OCI-LY7 (cell line): ENCODE measurements at regions of chr12 and their contacts with region 1.

Region 1: GRCh38 chr12:6752921-6753771 is at the start of gene MLF2:
- DNase-seq: peak; percentile 97
- H3K4me3 ChIP-seq: peak within 1 kb of the TSS; percentile 89
- H3K27ac ChIP-seq: peak within 1 kb of the TSS; percentile 73
- H3K4me1 ChIP-seq: peaks cover 17% of the 10 kb centered on the region
- CTCF ChIP-seq: no peak
- total RNA-seq, gene MLF2: 87.3 and 96.2 TPM in 2 replicates

Region 2: DNA sequence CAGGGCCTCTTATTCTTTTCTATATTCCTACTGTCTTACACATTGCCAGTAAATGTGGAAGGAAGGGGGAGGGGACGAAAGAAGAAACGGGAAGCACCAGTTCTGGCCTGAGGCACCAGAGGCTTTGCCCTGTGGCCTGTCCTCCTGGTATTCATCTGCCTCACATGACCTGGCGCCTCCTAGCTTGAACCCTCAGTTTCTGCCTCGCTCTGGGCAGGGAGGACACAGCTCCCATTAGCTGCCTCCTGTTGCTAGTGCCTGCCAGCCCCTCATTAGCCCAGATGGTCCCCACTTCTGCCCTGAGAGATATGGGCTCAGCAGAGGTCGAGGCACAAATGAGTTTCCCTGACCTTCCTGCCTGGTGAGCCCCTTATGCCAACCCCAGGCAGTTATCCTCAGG is 445.6 kb before region 1 on chr12:
- CTCF ChIA-PET with region 1: no interaction called
- POLR2A ChIA-PET with region 1: no interaction called
- intact Hi-C with region 1: no loop called
- DNase-seq: no peak
- H3K4me3 ChIP-seq: no peak overlapping the region
- H3K27ac ChIP-seq: no peak overlapping the region
- H3K4me1 ChIP-seq: no peaks in the 10 kb centered on the region
- CTCF ChIP-seq: no peak

Region 3: GRCh38 chr12:6766651-6767349 is 13.7 kb after region 1 on chr12:
- CTCF ChIA-PET with region 1: interaction called, 21 read pairs
- POLR2A ChIA-PET with region 1: interaction called, 7 read pairs
- intact Hi-C with region 1: loop called (anchors 1 kb)
- DNase-seq: peak; percentile 76
- H3K4me3 ChIP-seq: peak overlapping the region; percentile 71
- H3K27ac ChIP-seq: no peak overlapping the region
- H3K4me1 ChIP-seq: peaks cover 40% of the 10 kb centered on the region
- CTCF ChIP-seq: peak; percentile 75

Region 4: DNA sequence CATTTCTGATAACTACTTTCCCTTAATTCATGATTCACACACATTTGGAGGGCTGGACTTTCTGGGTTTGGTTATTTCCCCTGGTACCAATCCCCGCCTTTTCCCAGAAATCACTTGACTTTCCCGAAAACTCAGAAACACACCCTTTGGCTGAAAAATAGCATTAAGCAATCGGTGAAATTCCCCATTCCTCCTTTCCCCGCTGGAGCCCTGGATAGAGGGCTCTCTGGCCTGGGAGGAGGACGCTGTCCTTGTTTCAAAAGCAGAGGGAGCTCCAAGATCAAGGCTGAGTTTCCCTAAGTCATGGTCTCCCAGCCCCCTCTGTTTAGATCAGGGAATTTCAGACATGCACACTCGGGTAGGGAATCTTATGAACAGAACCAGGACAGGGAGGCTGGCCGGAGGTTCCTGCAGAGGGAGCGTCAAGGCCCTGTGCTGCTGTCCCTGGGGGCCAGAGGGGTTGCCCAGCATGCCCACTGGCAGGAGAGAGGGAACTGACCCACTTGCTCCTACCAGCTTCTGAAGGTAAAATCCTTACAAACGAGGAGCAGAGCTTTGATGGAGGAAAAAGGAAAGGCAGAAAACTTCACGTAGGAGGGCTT is 307.3 kb after region 1 on chr12 and contains the start of gene C1S:
- CTCF ChIA-PET with region 1: no interaction called
- POLR2A ChIA-PET with region 1: no interaction called
- intact Hi-C with region 1: no loop called
- DNase-seq: no peak
- H3K4me3 ChIP-seq: no peak within 1 kb of the TSS
- H3K27ac ChIP-seq: no peak within 1 kb of the TSS
- H3K4me1 ChIP-seq: no peaks in the 10 kb centered on the region
- CTCF ChIP-seq: no peak
- total RNA-seq, gene C1S: 5.2 and 9.8 TPM in 2 replicates